ENCODE measurements at regions of chr12 and their contacts with region 1.

Region 1: GRCh38 chr12:40921563-40922163 is 229.4 kb downstream of the CNTN1 start:
- DNase-seq: no peak
- H3K4me3 Mint-ChIP-seq: no peak overlapping the region
- H3K27ac Mint-ChIP-seq: no peak overlapping the region
- H3K4me1 Mint-ChIP-seq: no peaks in the 10 kb centered on the region
- H3K27me3 Mint-ChIP-seq: peaks cover 7% of the 10 kb centered on the region

Region 2: GRCh38 chr12:40010899-40011774 is 910.5 kb before region 1 on chr12:
- CTCF ChIA-PET with region 1: no interaction called
- intact Hi-C with region 1: loop called (anchors 5 kb)
- DNase-seq: peak; percentile 69
- H3K4me3 Mint-ChIP-seq: peak overlapping the region; percentile 25
- H3K27ac Mint-ChIP-seq: no peak overlapping the region
- H3K4me1 Mint-ChIP-seq: peaks cover 16% of the 10 kb centered on the region
- H3K27me3 Mint-ChIP-seq: no peaks in the 10 kb centered on the region

Region 3: DNA sequence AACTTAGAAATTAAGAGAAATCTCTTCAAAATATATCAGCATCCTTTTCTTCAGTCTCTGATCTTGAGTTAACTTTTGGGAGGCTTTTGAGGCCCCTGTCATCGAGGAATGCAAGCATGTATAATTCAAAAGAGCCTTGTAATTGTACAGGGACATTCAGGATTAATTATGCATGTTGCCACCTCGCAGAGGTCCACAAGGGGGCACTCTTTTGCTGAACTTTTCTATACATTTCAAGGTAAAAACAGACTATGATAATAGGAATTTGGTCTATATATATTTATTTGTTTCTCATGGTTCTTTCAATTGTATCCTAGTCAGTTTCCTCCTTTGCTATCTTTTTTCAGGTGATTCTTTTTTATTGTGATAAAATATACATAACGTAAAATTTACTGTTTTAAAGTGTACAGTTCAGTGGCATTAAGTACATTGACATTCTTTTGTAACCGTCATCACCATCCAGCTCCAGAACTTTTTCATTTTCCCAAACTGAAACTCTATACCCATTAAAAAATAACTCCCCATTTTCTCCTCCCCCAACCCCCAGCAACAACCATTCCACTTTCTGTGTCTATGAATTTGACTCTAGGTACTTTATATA is 768.8 kb before region 1 on chr12:
- CTCF ChIA-PET with region 1: no interaction called
- intact Hi-C with region 1: loop called (anchors 1 kb)
- DNase-seq: peak; percentile 68
- H3K4me3 Mint-ChIP-seq: no peak overlapping the region
- H3K27ac Mint-ChIP-seq: no peak overlapping the region
- H3K4me1 Mint-ChIP-seq: no peaks in the 10 kb centered on the region
- H3K27me3 Mint-ChIP-seq: peaks cover 16% of the 10 kb centered on the region

Region 4: GRCh38 chr12:40325349-40325960 is 596.2 kb before region 1 on chr12:
- CTCF ChIA-PET with region 1: no interaction called
- intact Hi-C with region 1: loop called (anchors 10 kb)
- DNase-seq: no peak
- H3K4me3 Mint-ChIP-seq: no peak overlapping the region
- H3K27ac Mint-ChIP-seq: no peak overlapping the region
- H3K4me1 Mint-ChIP-seq: no peaks in the 10 kb centered on the region
- H3K27me3 Mint-ChIP-seq: no peaks in the 10 kb centered on the region

Region 5: DNA sequence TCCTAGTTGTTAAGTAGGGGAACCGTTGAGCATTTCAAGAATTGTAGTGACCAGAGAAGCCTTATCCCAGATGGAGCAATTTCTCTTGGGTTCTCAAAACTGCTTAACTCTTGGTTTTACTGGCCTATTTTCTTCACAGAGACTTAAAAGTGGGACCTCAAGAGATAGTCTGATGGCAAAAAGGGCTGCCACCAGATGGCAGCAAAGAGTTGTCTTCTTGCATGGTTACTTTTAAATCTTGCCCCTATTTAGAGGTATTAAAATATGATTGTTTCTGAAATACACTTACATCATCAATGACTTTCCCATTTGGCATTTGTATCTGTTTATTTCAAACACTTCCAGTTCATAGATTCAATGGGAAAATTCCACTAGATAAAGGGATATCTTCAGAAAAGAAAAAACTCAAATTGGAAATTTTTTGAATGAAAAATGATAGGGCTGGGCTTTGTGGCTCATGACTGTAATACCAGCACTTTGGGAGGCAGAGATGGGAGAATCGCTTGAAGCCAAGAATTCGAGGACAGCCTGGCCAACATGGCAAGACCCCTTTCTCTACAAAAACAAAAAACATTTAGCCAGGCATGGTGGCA is 299.3 kb before region 1 on chr12:
- CTCF ChIA-PET with region 1: no interaction called
- intact Hi-C with region 1: loop called (anchors 1 kb)
- DNase-seq: peak; percentile 53
- H3K4me3 Mint-ChIP-seq: no peak overlapping the region
- H3K27ac Mint-ChIP-seq: no peak overlapping the region
- H3K4me1 Mint-ChIP-seq: no peaks in the 10 kb centered on the region
- H3K27me3 Mint-ChIP-seq: no peaks in the 10 kb centered on the region

Region 6: GRCh38 chr12:40647651-40648050 is 274.0 kb before region 1 on chr12:
- CTCF ChIA-PET with region 1: no interaction called
- intact Hi-C with region 1: no loop called
- DNase-seq: no peak
- H3K4me3 Mint-ChIP-seq: no peak overlapping the region
- H3K27ac Mint-ChIP-seq: no peak overlapping the region
- H3K4me1 Mint-ChIP-seq: no peaks in the 10 kb centered on the region
- H3K27me3 Mint-ChIP-seq: no peaks in the 10 kb centered on the region